A673 (cell line): ENCODE measurements at regions of chr15 and their contacts with region 1.

Region 1: GRCh38 chr15:64355944-64356709 is at the start of gene CSNK1G1:
- DNase-seq: peak; percentile 99
- H3K4me3 ChIP-seq: peak within 1 kb of the TSS; percentile 94
- H3K27ac ChIP-seq: peak within 1 kb of the TSS; percentile 89
- H3K4me1 ChIP-seq: peaks cover 24% of the 10 kb centered on the region
- H3K27me3 ChIP-seq: no peaks in the 10 kb centered on the region
- CTCF ChIP-seq: peak; percentile 61
- total RNA-seq, gene CSNK1G1: 23.1 and 27.4 TPM in 2 replicates

Region 2: DNA sequence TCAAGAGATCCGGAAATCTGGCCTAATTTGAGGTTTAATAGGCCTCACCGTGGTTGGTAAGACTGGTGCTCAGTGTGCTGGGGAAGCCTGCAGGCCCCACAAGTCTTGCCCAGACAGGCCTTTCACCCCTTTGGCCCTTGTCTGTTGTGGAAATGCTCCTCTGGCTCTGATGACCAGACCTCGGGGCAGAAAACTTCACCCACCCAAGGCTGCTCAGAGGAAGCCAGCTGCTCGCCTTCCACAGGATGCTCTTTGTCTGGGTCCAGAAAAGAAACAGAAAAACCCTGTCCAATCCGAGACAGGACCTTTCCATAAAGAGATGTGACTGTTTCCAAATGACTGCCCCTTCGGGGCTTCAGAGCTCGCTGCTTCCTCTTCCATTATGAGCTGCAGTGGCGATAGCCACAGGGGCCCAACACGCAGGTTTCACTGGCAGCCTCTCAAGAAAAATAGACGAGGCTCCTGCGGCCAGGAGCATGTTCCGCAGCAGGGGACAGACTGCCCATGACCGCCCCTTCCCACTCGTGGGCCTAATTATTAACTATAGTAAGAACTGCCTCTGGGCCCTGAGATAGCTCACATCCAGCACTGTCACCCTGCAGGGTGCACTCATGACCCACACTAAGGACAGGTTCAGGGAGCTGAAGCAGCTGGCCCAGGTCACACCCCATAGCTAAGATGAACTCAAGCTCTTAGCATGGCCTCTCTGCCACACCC is 211.4 kb before region 1 on chr15:
- CTCF ChIA-PET with region 1: no interaction called
- POLR2A ChIA-PET with region 1: no interaction called
- intact Hi-C with region 1: no loop called
- DNase-seq: no peak
- H3K4me3 ChIP-seq: no peak overlapping the region
- H3K27ac ChIP-seq: no peak overlapping the region
- H3K4me1 ChIP-seq: peaks cover 14% of the 10 kb centered on the region
- H3K27me3 ChIP-seq: no peaks in the 10 kb centered on the region
- CTCF ChIP-seq: no peak

Region 3: GRCh38 chr15:64162870-64163658 is 193.1 kb before region 1 on chr15 and contains the start of gene PPIB:
- CTCF ChIA-PET with region 1: no interaction called
- POLR2A ChIA-PET with region 1: no interaction called
- intact Hi-C with region 1: loop called (anchors 1 kb)
- DNase-seq: peak; percentile 99
- H3K4me3 ChIP-seq: peak within 1 kb of the TSS; percentile 77
- H3K27ac ChIP-seq: peak within 1 kb of the TSS; percentile 79
- H3K4me1 ChIP-seq: peaks cover 10% of the 10 kb centered on the region
- H3K27me3 ChIP-seq: no peaks in the 10 kb centered on the region
- CTCF ChIP-seq: peak; percentile 73
- total RNA-seq, gene PPIB: 410 and 416 TPM in 2 replicates